Activated naive CD4-positive, alpha-beta T cell treated with anti-CD3 and anti-CD28 coated beads, Interleukin-2, amount 10 ng/mL, durations not matched to agents 7 days and 5 days (primary cell): ENCODE measurements at regions of chr1 and their contacts with region 1.

Region 1: DNA sequence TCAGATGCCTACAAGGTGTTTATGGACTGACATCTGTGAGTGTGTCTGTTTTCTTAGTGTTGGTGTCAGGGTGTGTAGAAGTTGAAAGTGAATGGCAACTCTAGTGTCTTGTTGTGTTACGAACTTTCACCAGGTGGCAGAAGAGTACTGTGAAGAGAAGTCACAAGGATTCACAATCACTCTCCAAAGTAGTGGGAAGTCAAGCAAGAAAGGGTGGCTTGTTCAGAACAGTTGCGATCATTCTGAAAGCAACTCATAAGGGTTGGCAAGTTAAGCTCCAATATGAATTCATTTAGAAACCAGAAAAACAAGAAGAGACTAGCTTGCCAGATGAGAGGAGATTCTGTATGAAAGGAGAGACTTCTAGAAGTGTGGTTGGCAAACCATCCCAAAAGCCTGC is 86.1 kb downstream of the FASLG start:
- DNase-seq: peak; percentile 55
- H3K4me3 Mint-ChIP-seq: no peak overlapping the region
- H3K27ac Mint-ChIP-seq: no peak overlapping the region
- H3K4me1 Mint-ChIP-seq: peaks cover 41% of the 10 kb centered on the region
- H3K27me3 Mint-ChIP-seq: peaks cover 49% of the 10 kb centered on the region

Region 2: GRCh38 chr1:172727956-172728603 is 16.9 kb before region 1 on chr1:
- CTCF ChIA-PET with region 1: interaction called, 16 read pairs
- DNase-seq: peak; percentile 63
- H3K4me3 Mint-ChIP-seq: no peak overlapping the region
- H3K27ac Mint-ChIP-seq: no peak overlapping the region
- H3K4me1 Mint-ChIP-seq: peaks cover 25% of the 10 kb centered on the region
- H3K27me3 Mint-ChIP-seq: peaks cover 24% of the 10 kb centered on the region

Region 3: DNA sequence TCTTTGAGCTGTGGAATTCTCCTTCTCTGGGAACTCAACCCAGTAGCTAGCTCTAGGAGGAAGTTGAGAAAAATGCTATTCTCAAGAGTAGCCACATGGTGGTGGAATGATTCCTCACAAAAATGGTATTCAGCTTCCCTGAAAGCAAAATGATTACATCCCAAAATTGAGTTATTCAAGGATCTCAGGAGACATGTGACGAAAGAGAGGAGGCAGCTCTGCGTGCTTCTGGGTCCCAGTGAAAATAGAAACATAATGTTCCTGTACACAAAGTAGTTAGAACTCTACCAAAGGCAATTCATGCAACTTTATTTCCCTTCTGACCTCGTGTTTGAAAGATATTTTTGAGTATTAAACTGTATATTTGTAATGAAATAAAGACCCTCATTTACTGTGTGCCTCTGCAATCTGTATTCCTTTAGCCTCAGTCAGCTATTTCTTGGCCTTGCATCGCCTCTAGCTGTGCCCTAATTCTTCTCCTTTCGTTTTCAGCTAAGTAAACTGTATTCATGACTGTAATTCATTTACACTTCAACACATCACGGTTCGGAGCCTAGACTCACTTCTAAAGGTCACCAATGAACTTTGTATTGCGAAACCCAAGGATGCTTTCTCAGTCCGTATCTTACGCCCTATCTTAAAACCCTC is 81.2 kb after region 1 on chr1:
- CTCF ChIA-PET with region 1: interaction called, 39 read pairs
- DNase-seq: no peak
- H3K4me3 Mint-ChIP-seq: no peak overlapping the region
- H3K27ac Mint-ChIP-seq: no peak overlapping the region
- H3K4me1 Mint-ChIP-seq: no peaks in the 10 kb centered on the region
- H3K27me3 Mint-ChIP-seq: peaks cover 10% of the 10 kb centered on the region

Region 4: GRCh38 chr1:173202430-173203145 is 457.6 kb after region 1 on chr1:
- CTCF ChIA-PET with region 1: interaction called, 177 read pairs
- DNase-seq: peak; percentile 24
- H3K4me3 Mint-ChIP-seq: no peak overlapping the region
- H3K27ac Mint-ChIP-seq: no peak overlapping the region
- H3K4me1 Mint-ChIP-seq: peaks cover 38% of the 10 kb centered on the region
- H3K27me3 Mint-ChIP-seq: peaks cover 6% of the 10 kb centered on the region

Region 5: GRCh38 chr1:173429471-173430402 is 684.7 kb after region 1 on chr1:
- CTCF ChIA-PET with region 1: interaction called, 25 read pairs
- DNase-seq: peak; percentile 79
- H3K4me3 Mint-ChIP-seq: peak overlapping the region; percentile 41
- H3K27ac Mint-ChIP-seq: peak overlapping the region; percentile 81
- H3K4me1 Mint-ChIP-seq: peaks cover 25% of the 10 kb centered on the region
- H3K27me3 Mint-ChIP-seq: no peaks in the 10 kb centered on the region